ENCODE measurements at regions of chr5 and their contacts with region 1.

Region 1: DNA sequence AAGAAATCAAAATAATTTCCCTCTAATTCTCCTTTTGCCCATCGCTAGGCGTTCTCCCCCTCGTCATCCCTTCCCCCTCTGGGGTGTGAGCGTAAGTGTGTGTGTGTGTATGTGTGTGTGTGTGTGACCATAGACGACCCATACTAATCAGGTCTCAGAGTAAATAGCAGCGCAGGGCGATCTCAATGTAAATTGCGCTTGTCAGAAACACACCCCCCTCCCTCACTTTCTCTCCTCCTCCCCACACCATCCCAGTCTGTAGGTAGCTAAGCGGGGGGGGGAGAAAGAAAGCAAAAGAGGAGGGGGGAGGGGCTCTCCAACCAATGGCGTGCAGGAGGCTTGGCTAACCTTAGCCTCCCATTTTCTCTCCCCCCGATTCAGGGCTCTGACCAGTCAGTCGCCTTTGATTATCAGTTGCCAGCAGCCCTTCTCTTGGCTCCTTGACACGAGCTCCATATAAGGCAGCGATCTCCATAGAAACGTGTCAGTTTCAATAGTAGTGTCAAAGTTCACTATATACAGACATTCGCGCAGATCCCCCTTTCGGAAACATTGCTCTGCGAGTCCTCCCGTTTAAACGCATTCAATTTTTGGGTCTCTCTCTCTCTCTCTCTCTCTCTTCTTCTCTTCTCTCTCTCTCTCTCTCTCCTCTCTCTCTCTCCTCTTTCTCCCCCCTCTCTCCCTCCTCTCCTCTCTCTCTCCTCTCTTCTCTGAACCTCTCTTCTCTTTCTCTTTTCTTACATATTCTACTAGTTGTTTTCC is at the start of gene NR2F1:
- DNase-seq: peak; percentile 46 to 96
- H3K4me3 ChIP-seq: peak within 1 kb of the TSS; percentile 96
- H3K27ac ChIP-seq: peak within 1 kb of the TSS; percentile 79
- H3K4me1 ChIP-seq: peaks cover 17% of the 10 kb centered on the region
- H3K27me3 ChIP-seq: no peaks in the 10 kb centered on the region
- CTCF ChIP-seq: peak; percentile 79
- total RNA-seq, gene NR2F1: 1.1 and 1.3 TPM in 2 replicates

Region 2: DNA sequence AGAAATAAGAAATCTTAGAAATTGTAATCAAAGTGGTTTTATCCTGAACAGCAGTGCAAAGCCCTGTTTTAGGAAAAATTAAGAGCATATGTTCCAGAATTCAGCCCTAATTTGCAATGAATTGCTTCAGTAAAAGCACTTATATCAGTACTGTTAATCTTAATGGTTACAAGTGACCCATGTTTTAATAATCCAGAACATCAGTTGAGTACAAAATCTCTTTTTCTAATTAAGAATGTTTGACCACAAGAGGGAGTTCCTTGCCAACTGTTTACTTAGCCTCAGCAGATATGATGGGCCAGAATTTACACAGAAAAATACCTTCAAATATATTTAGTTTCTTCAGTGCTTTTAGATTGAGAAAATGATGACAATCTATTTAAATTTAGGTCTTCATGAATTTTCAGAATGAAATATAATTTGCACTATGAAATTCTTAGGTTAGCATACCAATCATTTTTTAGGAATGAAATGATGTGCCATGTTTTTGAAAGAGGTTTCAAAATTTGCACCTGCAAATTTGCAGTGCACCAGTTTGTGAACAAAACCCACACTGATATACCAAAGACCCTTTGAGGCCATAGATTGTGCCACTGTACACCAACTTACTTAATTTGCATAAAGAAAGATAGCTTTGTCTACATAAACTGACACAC is 1273.4 kb before region 1 on chr5:
- CTCF ChIA-PET with region 1: no interaction called
- POLR2A ChIA-PET with region 1: no interaction called
- intact Hi-C with region 1: loop called (anchors 10 kb)
- DNase-seq: peak in 1 of 2 experiments; percentile 37
- H3K4me3 ChIP-seq: no peak overlapping the region
- H3K27ac ChIP-seq: no peak overlapping the region
- H3K4me1 ChIP-seq: no peaks in the 10 kb centered on the region
- H3K27me3 ChIP-seq: no peaks in the 10 kb centered on the region
- CTCF ChIP-seq: peak; percentile 79

Region 3: GRCh38 chr5:93092349-93093105 is 490.3 kb before region 1 on chr5:
- CTCF ChIA-PET with region 1: interaction called, 3 read pairs
- POLR2A ChIA-PET with region 1: no interaction called
- intact Hi-C with region 1: loop called (anchors 5 kb)
- DNase-seq: no peak
- H3K4me3 ChIP-seq: no peak overlapping the region
- H3K27ac ChIP-seq: no peak overlapping the region
- H3K4me1 ChIP-seq: peaks cover 7% of the 10 kb centered on the region; the same call in 1 of the 2 replicates
- H3K27me3 ChIP-seq: no peaks in the 10 kb centered on the region
- CTCF ChIP-seq: peak; percentile 48; the same call in 1 of the 2 replicates

Region 4: GRCh38 chr5:93532370-93532769 is 50.5 kb before region 1 on chr5:
- CTCF ChIA-PET with region 1: interaction called, 12 read pairs
- POLR2A ChIA-PET with region 1: no interaction called
- intact Hi-C with region 1: no loop called
- DNase-seq: no peak
- H3K4me3 ChIP-seq: no peak overlapping the region
- H3K27ac ChIP-seq: no peak overlapping the region
- H3K4me1 ChIP-seq: no peaks in the 10 kb centered on the region
- H3K27me3 ChIP-seq: no peaks in the 10 kb centered on the region
- CTCF ChIP-seq: no peak

Region 5: GRCh38 chr5:93800988-93801811 is 218.3 kb after region 1 on chr5:
- CTCF ChIA-PET with region 1: interaction called, 8 read pairs
- POLR2A ChIA-PET with region 1: no interaction called
- intact Hi-C with region 1: loop called (anchors 1 kb)
- DNase-seq: peak; percentile 53 to 90
- H3K4me3 ChIP-seq: peak overlapping the region; percentile 43
- H3K27ac ChIP-seq: peak overlapping the region; percentile 61
- H3K4me1 ChIP-seq: peaks cover 18% of the 10 kb centered on the region
- H3K27me3 ChIP-seq: no peaks in the 10 kb centered on the region
- CTCF ChIP-seq: peak; percentile 90

Region 6: DNA sequence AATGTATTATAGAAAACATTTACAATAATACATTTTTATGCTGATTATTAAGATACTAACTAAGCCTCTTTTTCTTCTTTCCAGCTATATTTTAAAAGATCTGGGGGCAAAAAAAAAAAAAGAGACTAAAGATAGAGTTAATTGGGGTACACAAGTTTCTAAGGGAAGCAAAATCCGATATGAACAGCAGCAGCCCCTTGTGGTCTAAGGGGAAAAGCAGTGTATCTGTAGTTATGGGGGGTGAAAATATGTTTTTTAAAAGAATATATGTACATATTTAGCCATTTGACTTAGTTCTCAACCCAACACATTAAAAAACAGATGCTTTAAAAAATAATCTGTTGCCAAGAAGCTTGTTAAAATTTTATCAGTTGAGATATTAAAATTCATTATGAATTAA is 292.8 kb after region 1 on chr5:
- CTCF ChIA-PET with region 1: no interaction called
- POLR2A ChIA-PET with region 1: no interaction called
- intact Hi-C with region 1: no loop called
- DNase-seq: no peak
- H3K4me3 ChIP-seq: no peak overlapping the region
- H3K27ac ChIP-seq: no peak overlapping the region
- H3K4me1 ChIP-seq: no peaks in the 10 kb centered on the region
- H3K27me3 ChIP-seq: no peaks in the 10 kb centered on the region
- CTCF ChIP-seq: no peak

Region 7: GRCh38 chr5:94736498-94736897 is 1153.6 kb after region 1 on chr5:
- CTCF ChIA-PET with region 1: no interaction called
- POLR2A ChIA-PET with region 1: no interaction called
- intact Hi-C with region 1: loop called (anchors 5 kb)
- DNase-seq: no peak
- H3K4me3 ChIP-seq: no peak overlapping the region
- H3K27ac ChIP-seq: no peak overlapping the region
- H3K4me1 ChIP-seq: no peaks in the 10 kb centered on the region
- H3K27me3 ChIP-seq: no peaks in the 10 kb centered on the region
- CTCF ChIP-seq: no peak

Measured in PC-9 (cell line).